Ascending aorta (tissue), 2 donors: ENCODE measurements at regions of chr3 and their contacts with region 1.

Region 1: DNA sequence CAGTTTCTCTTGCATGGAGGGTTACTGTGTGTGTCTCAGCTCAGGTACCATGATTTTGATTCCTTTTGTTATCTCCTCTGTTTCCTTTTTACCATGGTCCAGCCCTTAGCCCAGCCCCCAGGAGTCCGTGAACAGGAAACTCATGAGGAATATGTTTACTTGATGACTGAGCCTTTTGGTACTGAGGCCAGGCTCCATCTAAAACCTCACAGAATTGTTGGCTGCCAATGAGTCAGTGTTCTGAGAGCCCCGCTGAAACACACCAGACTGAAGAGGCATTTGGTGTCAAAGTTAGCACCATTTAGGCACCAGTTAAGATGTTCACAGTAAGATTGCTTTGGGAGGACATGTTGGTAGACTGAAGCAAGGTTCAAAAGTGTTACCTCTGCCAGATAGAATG is 80.9 kb downstream of the DGKG start:
- DNase-seq: peak in 1 of 2 donors; percentile 75
- H3K4me3 ChIP-seq: no peak overlapping the region
- H3K27ac ChIP-seq: peak overlapping the region; percentile 58 to 77
- H3K4me1 ChIP-seq: peaks cover 0 to 4% of the 10 kb centered on the region in 2 donors
- H3K27me3 ChIP-seq: no peaks in the 10 kb centered on the region
- CTCF ChIP-seq: no peak

Region 2: GRCh38 chr3:186413615-186414415 is 132.6 kb after region 1 on chr3:
- intact Hi-C with region 1: loop called (anchors 5 kb)
- DNase-seq: peak in 1 of 2 donors; percentile 81
- H3K4me3 ChIP-seq: peak overlapping the region; percentile 61 to 63
- H3K27ac ChIP-seq: peak overlapping the region; percentile 56 to 69
- H3K4me1 ChIP-seq: peaks cover 0 to 17% of the 10 kb centered on the region in 2 donors
- H3K27me3 ChIP-seq: no peaks in the 10 kb centered on the region
- CTCF ChIP-seq: no peak